HEK293 (cell line): ENCODE measurements at regions of chr18 and their contacts with region 1.

Region 1: DNA sequence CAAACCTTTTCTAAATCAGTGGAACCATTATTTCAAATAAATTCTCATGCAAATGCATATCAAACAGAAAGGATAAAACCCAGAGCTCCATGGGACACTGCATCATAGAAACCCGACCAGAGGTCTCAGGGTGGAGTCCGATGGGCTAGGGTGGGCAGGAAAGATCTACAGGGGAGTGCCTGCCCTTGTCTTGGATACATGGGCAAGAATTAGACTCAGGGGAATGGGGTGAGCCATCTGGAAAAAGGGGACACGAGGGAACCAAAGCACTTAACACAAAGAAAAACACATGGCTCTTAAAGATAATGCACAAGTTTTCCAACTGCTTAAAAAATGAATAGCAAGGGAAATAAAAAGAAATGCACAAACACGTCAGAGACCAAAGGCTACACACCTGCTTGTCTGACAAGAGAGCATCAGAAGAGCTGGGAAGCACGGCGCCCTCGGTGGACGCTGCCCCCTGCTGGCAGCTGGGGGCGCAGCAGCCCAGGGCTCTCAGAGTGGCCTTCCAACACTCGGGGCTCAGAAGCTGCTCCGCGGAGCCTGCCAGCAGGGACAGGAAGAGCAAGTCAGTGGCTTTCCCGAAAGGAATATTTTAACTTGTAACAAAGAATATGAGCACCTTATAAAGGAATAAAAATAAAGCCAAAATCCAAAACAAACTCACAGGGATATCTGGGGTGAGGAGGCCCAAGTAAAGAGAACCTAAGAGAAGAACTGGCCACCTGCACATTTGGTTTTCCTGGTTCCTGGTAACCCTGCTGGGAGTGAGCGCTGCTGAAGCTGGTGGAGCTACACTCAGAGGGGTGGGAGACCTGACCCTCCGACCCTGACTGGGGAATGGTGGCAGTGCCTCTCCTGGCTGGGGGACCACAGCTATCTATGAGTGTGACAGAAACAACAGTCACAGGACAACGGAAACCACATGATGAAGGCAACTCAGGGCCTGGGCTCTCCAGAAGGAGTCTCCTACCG is 54.5 kb downstream of the SIGLEC15 start:
- H3K4me3 ChIP-seq: no peak overlapping the region
- H3K27ac ChIP-seq: no peak overlapping the region
- H3K4me1 ChIP-seq: no peaks in the 10 kb centered on the region
- CTCF ChIP-seq: peak; percentile 88

Region 2: DNA sequence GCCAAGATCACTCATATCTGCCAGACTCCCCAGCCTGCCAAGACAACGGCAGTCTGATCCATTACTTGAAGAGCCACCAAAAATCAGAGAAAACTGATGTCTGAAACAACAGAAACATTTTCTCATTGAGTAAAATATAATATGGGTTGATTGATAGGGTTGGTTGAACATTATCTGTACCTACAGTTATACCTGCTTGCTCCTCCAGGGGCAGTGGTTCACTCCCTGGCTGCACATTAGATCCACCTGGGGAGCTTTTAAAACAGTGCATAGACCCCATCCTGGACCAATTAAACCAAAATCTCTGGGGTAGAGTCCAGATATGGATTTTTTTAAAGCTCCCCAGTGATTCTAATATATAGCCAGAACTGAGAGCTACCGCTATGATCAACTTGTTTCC is 308.3 kb before region 1 on chr18:
- CTCF ChIA-PET with region 1: no interaction called
- POLR2A ChIA-PET with region 1: no interaction called
- H3K4me3 ChIP-seq: no peak overlapping the region
- H3K27ac ChIP-seq: no peak overlapping the region
- H3K4me1 ChIP-seq: peaks cover 18% of the 10 kb centered on the region
- CTCF ChIP-seq: no peak

Region 3: GRCh38 chr18:45664824-45665763 is 214.9 kb before region 1 on chr18:
- CTCF ChIA-PET with region 1: interaction called, 60 read pairs
- POLR2A ChIA-PET with region 1: no interaction called
- H3K4me3 ChIP-seq: no peak overlapping the region
- H3K27ac ChIP-seq: no peak overlapping the region
- H3K4me1 ChIP-seq: peaks cover 2% of the 10 kb centered on the region; the same call in 1 of the 2 replicates
- CTCF ChIP-seq: peak; percentile 76

Region 4: DNA sequence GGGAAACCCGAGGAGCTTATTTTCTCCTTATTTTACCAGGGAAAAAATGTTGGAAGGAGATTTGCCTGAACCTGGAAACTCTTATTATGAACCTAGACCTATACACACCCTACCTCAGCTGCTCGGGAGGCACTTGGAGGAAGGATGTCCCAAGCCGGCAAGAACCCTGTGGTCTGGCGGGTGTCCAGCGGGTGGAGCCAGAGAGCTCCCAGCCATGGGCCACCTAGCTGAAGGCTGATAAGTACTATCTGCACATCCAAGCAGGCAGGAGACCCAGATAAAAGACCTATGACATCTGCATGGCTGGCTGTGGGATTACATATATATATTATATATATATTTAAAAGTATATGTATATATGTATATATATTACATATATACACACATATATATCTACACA is 157.1 kb before region 1 on chr18:
- CTCF ChIA-PET with region 1: interaction called, 75 read pairs
- POLR2A ChIA-PET with region 1: interaction called, 3 read pairs
- H3K4me3 ChIP-seq: no peak overlapping the region
- H3K27ac ChIP-seq: no peak overlapping the region
- H3K4me1 ChIP-seq: no peaks in the 10 kb centered on the region
- CTCF ChIP-seq: no peak

Region 5: DNA sequence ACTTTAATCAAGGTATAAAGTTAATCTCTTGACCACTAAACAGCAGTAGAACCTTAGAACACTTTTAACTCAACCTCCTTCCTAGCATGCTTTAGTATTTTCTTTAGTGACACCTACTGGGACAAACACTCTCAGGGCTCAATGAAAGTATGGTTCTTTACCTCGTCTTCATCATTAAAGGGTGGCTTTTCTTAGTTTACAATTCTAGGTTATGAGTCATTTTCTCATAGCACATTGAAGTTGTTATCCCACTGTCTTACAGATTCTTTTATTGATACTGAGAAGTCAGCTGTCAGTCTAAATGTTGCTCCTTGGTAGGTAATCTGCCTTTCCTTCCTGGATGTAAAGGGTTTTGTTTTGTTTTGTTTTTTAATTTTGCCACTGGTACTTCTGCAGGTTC is 16.5 kb before region 1 on chr18:
- CTCF ChIA-PET with region 1: interaction called, 70 read pairs
- POLR2A ChIA-PET with region 1: no interaction called
- H3K4me3 ChIP-seq: no peak overlapping the region
- H3K27ac ChIP-seq: no peak overlapping the region
- H3K4me1 ChIP-seq: no peaks in the 10 kb centered on the region
- CTCF ChIP-seq: no peak

Region 6: DNA sequence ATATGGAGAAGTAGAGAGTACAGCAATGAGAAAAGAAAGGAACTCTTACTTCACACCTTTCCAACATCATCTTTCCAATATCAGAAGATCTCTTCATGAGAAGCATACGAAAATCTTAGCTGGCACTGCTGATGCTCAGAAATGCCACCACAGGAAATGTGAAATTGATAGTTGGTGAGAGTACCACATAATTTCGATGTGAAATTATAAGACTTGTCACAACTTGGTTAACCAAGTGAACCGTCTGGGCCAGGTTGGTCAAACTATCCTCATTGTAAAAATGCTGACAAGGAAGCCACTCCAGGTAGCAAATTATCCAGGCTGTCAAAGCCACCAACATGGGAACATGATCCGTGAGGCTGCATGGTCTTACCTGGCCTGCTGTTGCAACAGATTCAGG is 20.7 kb after region 1 on chr18:
- CTCF ChIA-PET with region 1: interaction called, 21 read pairs
- POLR2A ChIA-PET with region 1: no interaction called
- H3K4me3 ChIP-seq: no peak overlapping the region
- H3K27ac ChIP-seq: no peak overlapping the region
- H3K4me1 ChIP-seq: no peaks in the 10 kb centered on the region
- CTCF ChIP-seq: no peak

Region 7: DNA sequence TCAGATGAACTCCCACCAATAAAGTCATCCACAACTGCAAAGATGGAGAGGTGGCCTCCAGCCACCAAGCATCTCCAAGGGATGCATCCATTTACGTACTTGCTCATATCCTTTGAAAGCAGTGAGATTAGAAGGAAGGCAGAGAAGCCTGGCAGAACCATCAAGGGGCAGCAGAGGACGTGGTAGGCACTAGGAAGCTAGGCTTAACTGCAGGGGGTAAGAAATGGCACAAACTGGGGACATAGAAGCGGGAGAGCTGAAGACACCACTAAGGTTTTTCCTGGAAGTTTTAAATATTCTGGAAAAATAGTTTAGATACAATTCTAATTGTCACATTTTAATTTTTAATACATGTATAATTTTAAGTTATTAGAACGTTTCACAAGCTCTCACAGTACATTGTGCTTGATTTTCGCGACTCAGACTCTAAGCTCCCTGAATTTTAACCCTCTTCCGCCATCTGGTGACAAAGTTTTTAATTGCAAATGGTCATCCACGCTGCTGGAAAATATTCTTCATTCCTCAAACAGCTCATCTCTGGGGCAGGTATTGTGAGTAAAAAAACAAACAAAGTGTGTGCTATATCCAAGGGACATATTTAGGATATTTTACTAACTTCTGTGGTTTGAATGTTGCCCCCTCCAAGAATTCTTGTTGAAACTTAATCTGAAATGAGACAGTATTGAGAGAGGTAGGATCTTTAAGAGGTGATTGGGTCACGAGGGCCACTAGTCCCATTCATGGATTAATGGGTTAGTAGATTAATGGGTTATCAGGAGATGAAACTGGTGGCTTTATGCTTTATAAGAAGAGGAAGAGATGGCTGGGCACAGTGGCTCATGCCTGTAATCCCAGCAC is 193.7 kb after region 1 on chr18:
- CTCF ChIA-PET with region 1: interaction called, 10 read pairs
- POLR2A ChIA-PET with region 1: no interaction called
- H3K4me3 ChIP-seq: no peak overlapping the region
- H3K27ac ChIP-seq: no peak overlapping the region
- H3K4me1 ChIP-seq: no peaks in the 10 kb centered on the region
- CTCF ChIP-seq: peak; percentile 21; the same call in 1 of the 2 replicates